H1 (cell line): ENCODE measurements at regions of chr15 and their contacts with region 1.

Region 1: DNA sequence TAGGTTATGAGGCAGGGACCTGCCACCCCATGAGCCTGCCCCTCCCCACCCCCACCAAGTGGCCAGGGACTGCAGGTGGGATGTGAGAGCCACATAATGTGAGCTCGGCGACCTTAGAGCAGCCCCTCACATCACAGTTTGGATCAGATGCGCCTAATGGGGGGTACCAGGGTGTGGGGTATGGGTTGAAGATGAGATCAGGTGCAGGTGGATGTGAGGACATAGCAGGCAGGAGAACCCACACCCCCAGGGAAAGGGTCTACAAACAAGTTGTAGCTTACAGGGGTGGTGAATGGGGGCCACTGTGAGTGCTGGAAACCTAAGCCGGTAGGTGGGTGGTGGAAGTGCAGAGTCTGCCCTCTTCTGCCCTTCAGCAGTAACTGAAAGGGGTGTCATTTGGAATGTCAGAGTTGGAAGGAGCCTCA is 94.0 kb downstream of the CORO2B start:
- DNase-seq: peak in 1 of 2 experiments; percentile 65
- H3K4me3 ChIP-seq: no peak overlapping the region
- H3K27ac ChIP-seq: no peak overlapping the region
- H3K4me1 ChIP-seq: peaks cover 2 to 3% (median 3%) of the 10 kb centered on the region in 4 experiments; a peak in 5 of 7 replicates
- H3K27me3 ChIP-seq: peaks cover 0 to 2% (median 0%) of the 10 kb centered on the region in 4 experiments; a peak in 2 of 7 replicates
- CTCF ChIP-seq: peak; percentile 63 to 86 (median 72)
- EP300 ChIP-seq: no peak
- POLR2A ChIP-seq: no peak
- RAD21 ChIP-seq: peak; percentile 78 to 87

Region 2: DNA sequence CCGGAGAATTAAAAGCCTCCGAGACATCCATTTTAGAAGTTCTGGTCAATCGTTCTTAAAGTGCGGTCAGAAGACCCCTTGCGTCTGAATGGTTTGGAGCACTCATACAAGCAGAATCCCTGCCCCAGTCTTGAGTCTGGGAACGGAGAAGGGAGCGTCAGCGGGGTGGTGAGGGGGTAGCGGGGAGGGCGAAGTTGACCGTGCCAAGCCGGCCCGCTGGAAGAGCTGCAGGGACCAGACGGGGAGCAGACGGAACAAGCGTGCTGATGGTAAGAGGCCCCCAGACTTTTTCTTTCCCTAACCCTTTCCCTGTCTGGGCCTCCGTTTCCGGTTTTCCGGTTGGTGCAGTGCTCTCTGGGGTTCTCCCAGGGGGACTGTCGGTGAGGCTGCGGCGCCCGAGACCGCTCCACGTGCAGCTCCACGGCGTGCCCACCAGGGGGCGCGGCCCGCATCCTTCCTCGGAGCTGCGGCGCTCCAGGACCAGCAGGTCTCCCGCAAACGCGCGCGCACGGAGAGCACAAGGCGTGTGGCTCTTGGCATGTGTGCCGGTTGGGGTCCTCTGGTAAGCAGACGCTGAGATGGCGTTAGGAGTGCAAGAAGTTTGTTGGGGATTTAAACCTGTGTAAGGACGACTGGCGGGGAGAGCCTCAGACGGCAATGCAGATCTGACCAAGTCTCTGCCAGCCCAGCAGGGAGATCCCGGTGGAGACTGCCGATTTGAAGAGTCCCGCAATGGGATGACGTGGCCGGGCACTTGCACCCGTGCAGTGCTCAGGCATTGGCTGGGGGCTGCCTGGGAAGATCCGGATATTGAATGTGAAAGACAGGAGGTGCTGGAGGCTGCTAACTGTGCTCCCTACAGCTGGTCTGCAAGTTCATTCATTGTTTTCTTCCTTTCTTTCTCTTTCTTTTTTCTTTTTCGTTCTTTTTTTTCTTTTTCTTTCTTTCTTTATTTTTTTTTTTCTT is 113.2 kb before region 1 on chr15:
- CTCF ChIA-PET with region 1: interaction called, 721 read pairs
- POLR2A ChIA-PET with region 1: interaction called, 6 read pairs
- DNase-seq: peak; percentile 80 to 95
- H3K4me3 ChIP-seq: peak overlapping the region; percentile 36 to 68 (median 52)
- H3K27ac ChIP-seq: no peak overlapping the region
- H3K4me1 ChIP-seq: peaks cover 0 to 22% (median 16%) of the 10 kb centered on the region in 4 experiments; a peak in 6 of 7 replicates
- H3K27me3 ChIP-seq: peaks cover 0 to 7% (median 4%) of the 10 kb centered on the region in 4 experiments; a peak in 3 of 7 replicates
- CTCF ChIP-seq: peak; percentile 86 to 93 (median 90)
- EP300 ChIP-seq: no peak
- POLR2A ChIP-seq: peak in 1 of 2 experiments; percentile 41; a peak in 1 of 3 replicates
- RAD21 ChIP-seq: peak; percentile 78 to 86

Region 3: DNA sequence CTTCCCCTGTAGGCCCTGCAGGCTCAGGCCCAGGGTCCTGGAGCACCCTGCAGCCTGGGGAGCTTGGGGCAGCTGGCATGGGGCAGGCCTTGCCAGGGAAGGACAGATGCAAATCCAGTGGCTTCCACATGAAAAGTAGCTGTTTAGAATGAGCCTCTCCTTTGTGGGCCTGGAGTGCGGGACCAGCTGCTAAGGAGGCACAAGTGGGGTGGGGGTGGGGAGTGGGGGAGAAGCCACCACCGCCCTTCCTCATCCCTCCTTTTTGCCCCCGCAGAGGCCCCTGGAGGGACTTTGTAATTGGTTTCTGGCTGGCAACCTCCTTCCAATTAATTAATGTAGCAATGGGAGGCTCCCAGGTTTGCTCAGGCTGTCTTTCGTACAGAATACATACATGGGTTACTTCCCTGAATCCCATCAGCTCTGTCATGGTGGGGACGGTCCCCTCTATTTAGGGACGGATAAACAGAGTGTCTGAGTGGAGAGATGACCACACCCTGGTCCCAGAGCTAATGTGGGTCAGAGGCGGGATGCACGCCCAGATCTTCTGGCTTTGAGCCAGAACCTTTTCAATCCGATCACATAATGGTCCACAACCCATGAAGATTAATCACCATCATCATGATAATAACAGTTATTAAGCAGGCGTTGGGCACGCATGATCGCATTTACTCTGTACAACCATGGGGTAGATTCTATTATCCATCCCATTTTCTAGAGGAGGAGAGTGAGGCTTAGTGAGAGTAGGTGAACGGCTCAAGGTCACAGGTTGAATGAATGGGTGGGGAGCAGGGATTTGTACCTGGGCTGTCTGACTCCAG is 87.8 kb before region 1 on chr15:
- CTCF ChIA-PET with region 1: interaction called, 26 read pairs
- POLR2A ChIA-PET with region 1: interaction called, 4 read pairs
- DNase-seq: no peak
- H3K4me3 ChIP-seq: no peak overlapping the region
- H3K27ac ChIP-seq: no peak overlapping the region
- H3K4me1 ChIP-seq: peaks cover 0 to 16% (median 8%) of the 10 kb centered on the region in 4 experiments
- H3K27me3 ChIP-seq: peaks cover 0 to 9% (median 6%) of the 10 kb centered on the region in 4 experiments; a peak in 4 of 7 replicates
- CTCF ChIP-seq: no peak
- EP300 ChIP-seq: no peak
- POLR2A ChIP-seq: no peak
- RAD21 ChIP-seq: no peak

Region 4: DNA sequence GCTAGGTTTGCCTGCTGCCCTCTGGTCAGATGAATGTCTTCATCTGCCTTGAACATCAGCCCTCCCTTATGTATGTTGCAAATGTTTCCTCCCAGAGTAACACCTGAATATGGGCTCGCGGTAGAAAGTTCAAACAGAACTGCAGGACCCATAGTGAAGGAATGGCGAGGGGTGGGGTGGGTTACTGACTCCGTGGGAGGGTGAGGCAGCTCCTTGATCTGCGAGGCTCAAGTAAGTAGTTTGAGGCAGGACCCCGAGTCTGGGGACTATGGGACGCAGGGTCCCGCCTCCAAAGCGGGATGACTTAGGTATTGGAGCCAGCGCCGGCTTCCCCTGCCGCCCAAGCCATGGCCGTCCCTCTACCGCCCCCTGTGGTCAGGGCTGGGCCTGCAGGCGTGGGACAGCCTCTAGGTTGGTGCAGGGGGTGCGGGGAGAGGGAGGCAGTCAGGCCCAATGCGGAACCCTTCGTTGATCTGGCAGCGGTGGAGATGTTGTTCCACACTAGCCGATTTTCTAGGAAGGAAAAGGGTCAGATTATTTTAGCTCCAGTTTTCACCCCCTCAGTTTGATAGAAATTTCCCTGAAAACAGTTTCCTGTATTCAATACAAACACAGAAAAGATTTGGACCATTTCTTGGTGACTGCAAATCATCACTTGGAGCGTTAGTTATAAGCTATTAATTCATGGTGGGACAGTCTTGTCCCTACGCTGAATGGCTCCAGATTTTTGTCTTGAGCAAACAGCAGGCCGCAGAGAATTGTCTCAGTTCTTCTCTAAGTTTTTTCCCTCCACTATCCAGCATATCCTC is 21.7 kb before region 1 on chr15:
- CTCF ChIA-PET with region 1: interaction called, 569 read pairs
- POLR2A ChIA-PET with region 1: interaction called, 3 read pairs
- DNase-seq: peak; percentile 72 to 100
- H3K4me3 ChIP-seq: peak overlapping the region in 2 of 4 experiments; percentile 19 to 33; a peak in 2 of 8 replicates
- H3K27ac ChIP-seq: no peak overlapping the region
- H3K4me1 ChIP-seq: peaks cover 6 to 19% (median 11%) of the 10 kb centered on the region in 4 experiments
- H3K27me3 ChIP-seq: no peaks in the 10 kb centered on the region
- CTCF ChIP-seq: peak; percentile 96 to 98 (median 97)
- EP300 ChIP-seq: no peak
- POLR2A ChIP-seq: no peak
- RAD21 ChIP-seq: peak; percentile 81 to 90

Region 5: GRCh38 chr15:68713874-68714273 is 41.1 kb after region 1 on chr15:
- CTCF ChIA-PET with region 1: interaction called, 11 read pairs
- POLR2A ChIA-PET with region 1: no interaction called
- DNase-seq: no peak
- H3K4me3 ChIP-seq: no peak overlapping the region
- H3K27ac ChIP-seq: no peak overlapping the region
- H3K4me1 ChIP-seq: no peaks in the 10 kb centered on the region
- H3K27me3 ChIP-seq: no peaks in the 10 kb centered on the region; a peak in 1 of 7 replicates
- CTCF ChIP-seq: no peak
- EP300 ChIP-seq: no peak
- POLR2A ChIP-seq: no peak
- RAD21 ChIP-seq: peak; percentile 11 to 38; a peak in 1 of 4 replicates